Lower leg skin (tissue), 4 donors: ENCODE measurements at regions of chr12 and their contacts with region 1.

Region 1: GRCh38 chr12:85866986-85867776 is 6.9 kb upstream of the NTS start:
- DNase-seq: no peak
- H3K4me3 ChIP-seq: no peak overlapping the region
- CTCF ChIP-seq: peak in 1 of 3 donors; percentile 54
- POLR2A ChIP-seq: no peak

Region 2: GRCh38 chr12:85575120-85576096 is 291.8 kb before region 1 on chr12:
- intact Hi-C with region 1: loop called (anchors 10 kb)
- DNase-seq: peak in 1 of 2 donors; percentile 44
- H3K4me3 ChIP-seq: no peak overlapping the region
- CTCF ChIP-seq: peak in 1 of 3 donors; percentile 9
- POLR2A ChIP-seq: no peak

Region 3: DNA sequence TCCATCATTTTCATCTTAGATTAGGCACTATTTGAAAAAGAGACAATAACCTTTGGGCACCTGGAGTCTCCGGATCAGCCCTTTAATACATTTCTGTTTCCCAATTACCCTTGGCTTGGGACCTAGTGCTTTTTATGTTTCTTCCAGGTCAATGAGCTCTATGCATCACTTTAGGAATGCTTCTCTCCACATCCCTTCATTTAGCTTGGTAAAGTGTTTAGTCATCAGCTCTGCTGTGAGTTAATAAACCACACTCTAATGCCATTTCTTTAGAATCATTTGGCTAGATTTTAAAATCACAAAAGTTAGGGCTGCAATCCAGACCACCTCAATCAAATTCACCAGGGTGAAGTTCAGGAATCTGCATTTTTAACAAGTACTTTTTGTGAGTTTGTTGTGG is 72.7 kb before region 1 on chr12:
- intact Hi-C with region 1: no loop called
- DNase-seq: no peak
- H3K4me3 ChIP-seq: no peak overlapping the region
- CTCF ChIP-seq: no peak
- POLR2A ChIP-seq: no peak